Activated B cell treated with CpG ODN at 0.5 μM for 24 hours (primary cell): ENCODE measurements at regions of chr18 and their contacts with region 1.

Region 1: DNA sequence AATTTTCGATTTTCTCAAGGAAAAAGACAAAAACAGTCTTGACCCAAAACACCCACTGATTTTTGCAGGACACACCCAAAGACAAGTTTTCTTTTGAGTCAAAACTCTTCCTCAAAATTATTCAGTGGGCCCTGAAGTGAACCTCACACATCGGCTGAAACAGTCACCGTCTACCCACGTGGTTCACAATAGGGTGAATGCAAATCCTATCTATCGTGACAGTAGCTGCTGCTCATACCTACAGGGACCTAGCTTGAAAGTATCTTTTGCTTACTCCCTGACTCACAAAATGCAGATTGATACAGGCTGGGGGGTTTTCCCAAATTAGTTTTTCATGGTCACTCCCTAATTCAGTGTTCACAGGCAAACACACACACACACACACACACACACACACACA is 10.7 kb upstream of the CD226 start:
- DNase-seq: no peak
- ATAC-seq: peak; percentile 67
- H3K4me3 Mint-ChIP-seq: no peak overlapping the region
- H3K27ac Mint-ChIP-seq: peak overlapping the region; percentile 80
- H3K4me1 Mint-ChIP-seq: peaks cover 16% of the 10 kb centered on the region
- H3K27me3 Mint-ChIP-seq: no peaks in the 10 kb centered on the region
- CTCF ChIP-seq: no peak

Region 2: DNA sequence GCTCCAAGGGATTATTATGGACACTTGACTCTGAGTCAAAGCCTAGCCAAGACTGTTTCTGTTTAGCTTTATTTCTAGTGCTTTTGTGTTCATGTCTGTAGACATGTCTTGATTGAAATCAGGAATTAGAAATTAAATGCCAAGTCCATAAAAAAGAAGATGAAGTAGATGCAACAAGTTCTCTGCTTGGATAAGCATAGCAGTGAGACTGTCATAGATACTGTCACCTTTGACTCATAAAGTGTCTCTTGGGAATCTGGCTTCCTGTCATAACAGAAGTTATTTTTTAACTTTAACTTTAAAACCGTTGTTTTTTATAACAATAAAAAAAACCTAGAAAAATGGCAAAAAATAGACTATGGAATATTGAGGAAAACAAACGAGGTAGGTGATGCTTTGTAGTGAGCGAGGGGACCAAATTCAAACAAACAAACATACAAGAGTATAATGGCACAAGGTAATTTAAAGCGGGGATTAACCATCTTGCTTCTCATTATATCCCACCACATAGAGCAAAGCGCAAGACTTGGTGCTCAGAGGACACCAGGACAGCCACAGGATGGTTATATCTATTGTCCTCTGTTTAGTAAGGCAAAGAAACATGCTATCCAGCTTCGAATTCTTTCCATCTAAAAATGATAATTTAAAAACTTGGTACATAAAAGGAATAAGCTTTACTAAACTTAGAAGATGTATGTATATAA is 75.3 kb before region 1 on chr18:
- CTCF ChIA-PET with region 1: no interaction called
- POLR2A ChIA-PET with region 1: interaction called, 4 read pairs
- intact Hi-C with region 1: loop called (anchors 2 kb)
- DNase-seq: no peak
- ATAC-seq: peak; percentile 85
- H3K4me3 Mint-ChIP-seq: peak overlapping the region; percentile 33
- H3K27ac Mint-ChIP-seq: peak overlapping the region; percentile 65
- H3K4me1 Mint-ChIP-seq: peaks cover 25% of the 10 kb centered on the region
- H3K27me3 Mint-ChIP-seq: peaks cover 3% of the 10 kb centered on the region
- CTCF ChIP-seq: no peak

Region 3: DNA sequence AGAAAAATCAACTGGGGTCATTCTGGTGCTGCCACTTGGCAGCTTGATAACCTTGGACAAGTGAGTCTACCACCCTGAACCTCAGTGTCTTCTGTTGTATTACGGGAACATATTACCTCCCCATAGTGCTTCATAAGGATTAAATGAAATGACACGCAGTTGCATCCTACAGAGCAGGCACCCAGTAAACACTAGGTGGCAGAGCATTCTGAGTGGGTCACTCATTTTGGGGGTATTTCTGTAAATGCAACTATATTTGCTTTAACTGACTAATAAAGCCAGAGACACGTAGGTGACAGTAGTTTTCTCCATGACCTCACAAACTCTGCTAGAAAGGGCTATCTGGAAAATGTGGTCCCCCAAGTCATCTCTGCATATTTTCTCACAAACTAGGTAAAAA is 15.4 kb before region 1 on chr18:
- CTCF ChIA-PET with region 1: no interaction called
- POLR2A ChIA-PET with region 1: no interaction called
- intact Hi-C with region 1: loop called (anchors 2 kb)
- DNase-seq: no peak
- ATAC-seq: no peak
- H3K4me3 Mint-ChIP-seq: no peak overlapping the region
- H3K27ac Mint-ChIP-seq: no peak overlapping the region
- H3K4me1 Mint-ChIP-seq: peaks cover 11% of the 10 kb centered on the region
- H3K27me3 Mint-ChIP-seq: no peaks in the 10 kb centered on the region
- CTCF ChIP-seq: no peak

Region 4: DNA sequence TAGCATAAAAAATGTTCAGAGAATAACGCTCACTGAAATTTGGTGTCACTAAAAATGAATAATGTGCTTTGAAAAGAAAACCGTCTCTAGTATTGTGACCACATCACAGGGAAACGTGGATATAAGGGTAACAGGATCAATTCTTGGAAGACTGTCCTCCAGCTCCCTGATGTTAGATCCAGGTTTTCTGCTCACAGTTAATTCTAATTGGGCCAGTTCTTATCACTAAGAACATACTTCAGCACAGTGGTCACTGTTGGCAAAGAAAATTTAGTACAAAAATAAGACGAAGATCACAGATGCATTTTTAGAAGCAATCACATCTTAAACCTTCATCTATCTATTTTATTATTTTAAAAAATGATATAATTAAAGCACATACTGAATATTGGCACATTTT is 46.3 kb after region 1 on chr18:
- CTCF ChIA-PET with region 1: no interaction called
- POLR2A ChIA-PET with region 1: interaction called, 3 read pairs
- intact Hi-C with region 1: loop called (anchors 5 kb)
- DNase-seq: no peak
- ATAC-seq: no peak
- H3K4me3 Mint-ChIP-seq: no peak overlapping the region
- H3K27ac Mint-ChIP-seq: no peak overlapping the region
- H3K4me1 Mint-ChIP-seq: no peaks in the 10 kb centered on the region
- H3K27me3 Mint-ChIP-seq: no peaks in the 10 kb centered on the region
- CTCF ChIP-seq: no peak

Region 5: DNA sequence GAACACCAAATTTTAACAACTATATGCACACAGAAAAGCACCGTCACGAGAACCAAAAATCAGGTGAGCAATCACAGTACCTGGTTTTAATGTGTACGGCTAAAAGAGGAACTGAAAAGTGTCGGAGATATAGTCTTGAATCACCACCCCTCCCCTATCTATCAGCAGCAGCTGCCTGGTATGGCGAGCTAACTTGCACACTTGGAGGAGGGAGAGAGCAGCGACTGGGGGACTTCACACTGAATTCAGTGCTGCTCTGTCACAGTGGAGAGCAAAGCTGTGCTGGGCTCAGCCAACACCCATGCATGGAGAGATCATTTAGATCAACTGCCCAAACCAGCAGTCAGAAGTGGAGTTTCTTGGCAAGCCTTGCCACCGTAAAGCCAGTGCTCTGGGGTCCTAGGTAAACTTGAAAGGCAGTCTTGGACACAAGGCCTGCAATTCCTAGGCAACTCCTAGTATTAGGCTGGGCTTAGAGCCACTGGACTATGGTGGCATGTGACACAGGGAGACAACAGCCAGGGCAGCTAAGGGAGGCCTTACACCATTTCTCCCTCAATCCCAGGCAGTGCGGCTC is 78.4 kb after region 1 on chr18:
- CTCF ChIA-PET with region 1: no interaction called
- POLR2A ChIA-PET with region 1: no interaction called
- intact Hi-C with region 1: loop called (anchors 5 kb)
- DNase-seq: peak; percentile 18
- ATAC-seq: peak; percentile 95
- H3K4me3 Mint-ChIP-seq: no peak overlapping the region
- H3K27ac Mint-ChIP-seq: peak overlapping the region; percentile 68
- H3K4me1 Mint-ChIP-seq: peaks cover 14% of the 10 kb centered on the region
- H3K27me3 Mint-ChIP-seq: no peaks in the 10 kb centered on the region
- CTCF ChIP-seq: no peak

Region 6: DNA sequence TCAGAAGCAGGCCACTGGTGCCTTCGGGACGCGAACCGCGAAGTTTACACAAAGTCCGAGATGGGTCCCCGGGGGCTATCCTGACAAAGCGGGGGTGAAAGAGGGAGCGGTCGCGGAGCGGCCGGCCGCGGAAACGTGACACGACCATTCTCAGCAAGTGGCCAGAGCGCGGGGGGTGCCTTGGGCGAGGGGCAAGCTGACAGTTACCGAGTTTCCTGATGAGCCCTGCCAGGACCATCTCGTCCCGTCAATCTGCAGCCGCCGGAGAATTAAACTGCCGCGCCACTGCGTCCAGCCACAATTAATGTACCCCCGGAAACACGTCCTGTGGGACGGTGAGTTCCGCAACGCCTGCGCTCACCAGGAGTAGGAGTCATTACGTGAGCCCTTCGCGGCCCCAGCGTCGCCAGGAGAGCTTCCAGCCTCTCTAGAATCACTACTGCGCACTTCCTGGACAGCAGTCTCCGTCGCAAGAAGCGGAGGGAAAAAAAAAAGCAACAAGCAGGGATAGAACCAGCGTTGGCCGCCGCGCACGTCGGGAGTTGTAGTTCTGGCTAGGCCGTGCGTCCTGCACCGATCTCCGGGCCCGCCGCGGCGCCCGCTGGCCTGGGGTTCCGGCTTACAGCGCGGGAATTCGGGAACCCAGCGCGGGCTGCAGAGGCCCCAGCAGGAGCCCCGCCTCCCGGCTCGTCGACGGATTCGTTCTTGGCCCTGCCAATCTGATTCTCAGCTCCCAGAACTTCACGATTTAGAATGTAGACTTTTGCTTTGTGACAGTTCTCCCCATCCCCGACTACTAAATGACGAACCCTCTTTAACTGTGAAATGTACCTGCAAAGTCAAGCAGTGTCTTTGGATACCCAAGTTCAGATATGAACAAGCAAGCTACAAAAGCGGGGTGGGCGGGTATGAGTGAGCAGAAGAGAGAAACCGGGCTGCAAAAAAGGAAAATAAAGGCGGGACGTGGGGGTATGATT is 247.3 kb after region 1 on chr18 and contains the start of gene RTTN:
- CTCF ChIA-PET with region 1: no interaction called
- POLR2A ChIA-PET with region 1: no interaction called
- intact Hi-C with region 1: loop called (anchors 5 kb)
- DNase-seq: peak; percentile 91
- ATAC-seq: peak; percentile 94
- H3K4me3 Mint-ChIP-seq: peak within 1 kb of the TSS; percentile 97
- H3K27ac Mint-ChIP-seq: peak within 1 kb of the TSS; percentile 99
- H3K4me1 Mint-ChIP-seq: peaks cover 25% of the 10 kb centered on the region
- H3K27me3 Mint-ChIP-seq: no peaks in the 10 kb centered on the region
- CTCF ChIP-seq: no peak
- total RNA-seq, gene RTTN: 25.0 and 25.9 TPM in 2 replicates